ENCODE measurements at regions of chr22 and their contacts with region 1.

Region 1: DNA sequence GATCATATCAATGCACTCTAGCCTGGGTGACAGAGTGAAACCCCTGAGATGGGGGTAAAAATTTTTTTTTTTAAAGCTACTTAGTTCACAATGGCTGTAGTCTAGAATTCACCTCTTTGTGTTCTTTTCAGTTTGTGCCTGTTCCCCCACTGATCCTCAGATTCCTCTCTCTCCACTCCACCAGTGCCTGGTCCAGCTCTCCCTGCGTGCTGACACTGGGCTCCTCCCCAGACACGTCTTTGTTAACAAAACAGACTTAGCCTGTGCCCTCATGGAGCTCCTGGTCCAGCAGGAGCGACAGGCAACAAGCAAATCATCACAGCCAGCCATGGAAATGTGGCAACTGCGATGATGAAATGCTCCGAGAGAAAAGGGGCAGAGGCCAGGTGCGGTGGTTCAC is 34.0 kb downstream of the IFT27 start:
- DNase-seq: no peak
- ATAC-seq: no peak
- H3K4me3 ChIP-seq: no peak overlapping the region
- H3K27ac ChIP-seq: no peak overlapping the region
- H3K4me1 ChIP-seq: no peaks in the 10 kb centered on the region
- H3K27me3 ChIP-seq: no peaks in the 10 kb centered on the region
- CTCF ChIP-seq: no peak

Region 2: DNA sequence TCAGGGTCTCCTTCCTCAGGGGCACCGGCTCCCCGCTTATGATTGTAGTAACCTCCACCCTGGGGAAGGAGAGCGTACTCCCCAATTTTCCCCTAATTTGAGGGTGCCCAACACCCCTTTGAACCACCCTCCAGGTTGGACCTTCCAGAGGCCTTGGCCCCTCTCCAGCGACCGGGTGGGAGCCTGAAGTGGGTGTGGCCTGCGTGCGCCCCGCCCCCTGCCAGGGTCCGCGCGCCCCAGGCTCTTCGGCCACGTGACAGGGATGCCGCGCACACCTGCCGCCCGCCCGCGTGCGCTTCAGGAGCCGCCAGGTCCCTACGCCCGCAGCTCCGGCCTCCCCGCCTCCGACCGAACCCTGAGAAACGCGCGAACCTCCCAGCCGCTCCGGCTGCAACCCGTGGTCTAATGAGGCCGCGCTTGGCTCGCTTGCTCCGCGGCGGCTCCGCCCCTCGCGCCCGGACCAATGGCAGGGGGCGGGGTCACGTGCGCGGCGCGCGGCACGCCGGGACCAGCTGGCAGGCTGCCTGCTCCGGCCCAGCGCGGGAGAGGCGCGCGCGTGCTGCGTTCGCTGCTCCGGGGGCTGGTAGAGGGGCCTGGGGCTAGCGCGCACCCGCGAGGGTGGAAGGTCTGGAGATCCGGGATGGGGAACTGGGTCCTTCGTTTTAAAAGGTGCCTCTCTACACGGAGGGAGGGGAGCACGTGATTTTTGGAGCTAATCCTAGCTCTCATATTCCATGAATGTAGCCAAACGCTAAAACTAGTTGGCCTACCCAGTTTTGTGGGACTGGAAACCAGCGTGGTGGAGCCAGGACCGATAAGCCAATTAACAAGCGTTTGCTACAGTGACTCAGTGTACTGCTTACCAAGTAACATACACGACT is 235.1 kb before region 1 on chr22 and contains the start of gene FOXRED2:
- CTCF ChIA-PET with region 1: no interaction called
- POLR2A ChIA-PET with region 1: no interaction called
- intact Hi-C with region 1: no loop called
- DNase-seq: peak; percentile 28
- ATAC-seq: peak; percentile 59
- H3K4me3 ChIP-seq: no peak within 1 kb of the TSS
- H3K27ac ChIP-seq: no peak within 1 kb of the TSS
- H3K4me1 ChIP-seq: peaks cover 9% of the 10 kb centered on the region; the same call in 1 of the 2 replicates
- H3K27me3 ChIP-seq: no peaks in the 10 kb centered on the region
- CTCF ChIP-seq: no peak
- total RNA-seq, gene FOXRED2: 5.5 and 6.5 TPM in 2 replicates

Region 3: GRCh38 chr22:36755316-36755715 is 13.3 kb after region 1 on chr22:
- CTCF ChIA-PET with region 1: interaction called, 15 read pairs
- POLR2A ChIA-PET with region 1: no interaction called
- intact Hi-C with region 1: no loop called
- DNase-seq: no peak
- ATAC-seq: no peak
- H3K4me3 ChIP-seq: no peak overlapping the region
- H3K27ac ChIP-seq: no peak overlapping the region
- H3K4me1 ChIP-seq: no peaks in the 10 kb centered on the region
- H3K27me3 ChIP-seq: no peaks in the 10 kb centered on the region
- CTCF ChIP-seq: no peak